ENCODE measurements at regions of chr20 and their contacts with region 1.

Region 1: DNA sequence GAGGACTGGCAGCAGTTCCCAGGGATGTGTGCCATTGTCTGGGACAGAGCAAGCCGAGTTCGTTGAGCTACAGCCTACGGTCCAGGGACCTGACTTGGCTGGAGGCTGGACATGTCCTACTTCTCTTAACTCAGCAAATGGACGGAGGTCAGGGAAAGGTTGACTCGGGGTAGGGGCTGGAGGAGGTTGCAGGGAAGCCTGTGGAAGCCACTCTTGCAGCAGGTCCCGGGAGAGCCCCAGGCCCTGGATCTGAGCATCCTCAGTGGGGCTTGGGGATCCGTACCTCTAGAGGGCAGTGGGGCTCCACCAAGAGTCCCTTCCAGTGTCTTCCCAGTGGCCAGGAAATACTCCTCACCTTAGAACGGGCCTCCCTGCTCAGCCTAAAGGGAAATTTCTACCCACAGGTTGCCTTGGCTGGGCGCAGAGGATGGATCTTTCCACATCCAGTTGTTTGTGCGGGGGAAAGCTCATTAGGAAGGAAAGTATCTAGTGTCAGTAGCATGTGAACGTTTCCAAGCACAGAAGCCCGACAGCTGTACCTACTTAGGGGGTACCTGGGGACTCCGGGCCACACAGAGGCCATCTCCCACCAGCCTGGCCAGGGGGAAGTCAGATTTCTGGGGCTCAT is 170.2 kb downstream of the NFATC2 start:
- DNase-seq: peak; percentile 84
- CTCF ChIP-seq: peak; percentile 81

Region 2: GRCh38 chr20:51128198-51128597 is 244.1 kb before region 1 on chr20:
- in situ Hi-C with region 1: no loop called
- DNase-seq: peak; percentile 38
- CTCF ChIP-seq: no peak

Region 3: GRCh38 chr20:51616060-51616459 is 243.8 kb after region 1 on chr20:
- in situ Hi-C with region 1: loop called (anchors 10 kb)
- DNase-seq: no peak
- CTCF ChIP-seq: no peak

Region 4: GRCh38 chr20:52204136-52204535 is 831.8 kb after region 1 on chr20:
- in situ Hi-C with region 1: no loop called
- DNase-seq: no peak
- CTCF ChIP-seq: no peak